Right cardiac atrium (tissue), 5 donors: ENCODE measurements at regions of chr9 and their contacts with region 1.

Region 1: DNA sequence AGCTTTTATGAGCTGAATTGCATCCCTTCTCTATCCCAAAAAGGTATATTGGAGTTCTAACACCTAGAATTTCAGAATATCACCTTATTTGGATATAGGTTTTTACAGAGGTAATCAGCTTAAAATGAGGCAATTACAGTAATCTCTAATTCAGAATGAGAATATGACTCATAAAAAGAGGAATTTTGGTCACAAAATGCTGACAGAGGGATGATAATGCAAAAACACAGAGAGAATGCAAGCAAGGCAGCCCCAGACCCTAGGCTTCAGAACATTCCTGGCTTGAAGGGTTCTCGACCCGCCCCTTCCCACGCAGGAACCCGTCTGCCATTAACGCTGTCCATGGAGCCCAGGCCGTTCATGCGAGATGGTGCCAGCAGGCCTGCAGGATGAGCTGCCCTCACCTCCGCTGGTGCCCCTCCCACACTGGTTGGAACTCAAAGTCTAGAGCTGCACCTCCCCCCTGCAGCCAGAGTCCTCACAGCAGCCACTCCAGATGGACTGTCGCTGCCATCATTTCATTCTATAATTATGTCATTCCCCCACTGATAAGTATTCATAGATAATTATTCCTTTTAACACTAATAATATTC is 1173.4 kb upstream of the ACO1 start:
- DNase-seq: peak in 2 of 3 donors; percentile 39 to 46
- ATAC-seq: no peak
- H3K4me3 ChIP-seq: no peak overlapping the region
- H3K27ac ChIP-seq: no peak overlapping the region
- H3K4me1 ChIP-seq: no peaks in the 10 kb centered on the region
- H3K27me3 ChIP-seq: no peaks in the 10 kb centered on the region

Region 2: GRCh38 chr9:31140316-31140715 is 70.8 kb before region 1 on chr9:
- intact Hi-C with region 1: loop called in 1 of 4 experiments (anchors 10 kb)
- DNase-seq: no peak
- ATAC-seq: no peak
- H3K4me3 ChIP-seq: no peak overlapping the region
- H3K27ac ChIP-seq: no peak overlapping the region
- H3K4me1 ChIP-seq: peaks cover 1% of the 10 kb centered on the region
- H3K27me3 ChIP-seq: no peaks in the 10 kb centered on the region

Region 3: GRCh38 chr9:31174681-31175080 is 36.4 kb before region 1 on chr9:
- intact Hi-C with region 1: no loop called
- DNase-seq: no peak
- ATAC-seq: no peak
- H3K4me3 ChIP-seq: no peak overlapping the region
- H3K27ac ChIP-seq: no peak overlapping the region
- H3K4me1 ChIP-seq: no peaks in the 10 kb centered on the region
- H3K27me3 ChIP-seq: no peaks in the 10 kb centered on the region

Region 4: DNA sequence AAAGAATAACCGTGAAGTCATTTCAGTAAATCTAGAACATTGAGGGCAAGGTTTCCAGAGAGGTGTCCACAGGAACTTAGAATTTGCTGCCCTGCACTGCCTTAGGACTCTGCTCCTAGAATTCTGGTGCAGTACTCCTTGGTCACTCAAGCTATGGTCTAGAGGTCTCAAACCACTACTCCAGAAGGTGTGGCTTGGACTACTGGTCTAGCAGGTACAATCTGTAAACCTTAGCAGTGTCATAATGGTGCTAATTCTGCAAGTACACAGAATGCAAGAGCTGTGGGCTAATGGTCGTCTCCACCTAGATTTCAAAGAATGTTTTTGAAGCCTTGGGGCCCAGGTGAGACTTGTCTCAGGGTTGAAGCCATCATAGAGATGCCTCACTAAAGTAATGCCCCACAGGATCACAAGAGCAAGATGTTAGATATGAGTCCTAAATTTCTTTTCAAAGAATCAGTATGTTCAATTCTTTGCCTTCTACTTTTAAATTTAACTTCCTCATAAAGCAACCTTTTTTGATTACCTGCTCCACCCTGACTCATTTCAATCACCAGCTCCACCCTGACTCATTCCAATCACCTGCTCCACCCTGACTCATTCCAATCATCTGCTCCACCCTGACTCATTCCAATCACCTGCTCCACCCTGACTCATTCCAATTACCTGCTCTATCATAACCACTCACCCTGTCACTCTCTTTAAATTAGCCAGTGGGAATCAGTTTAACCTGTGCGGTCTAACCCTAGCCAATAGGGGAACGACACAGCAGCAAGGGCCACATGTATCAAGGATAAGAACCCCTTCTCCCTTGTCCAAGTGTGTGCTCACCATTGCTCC is 61.6 kb after region 1 on chr9:
- intact Hi-C with region 1: no loop called
- DNase-seq: no peak
- ATAC-seq: no peak
- H3K4me3 ChIP-seq: no peak overlapping the region
- H3K27ac ChIP-seq: no peak overlapping the region
- H3K4me1 ChIP-seq: no peaks in the 10 kb centered on the region
- H3K27me3 ChIP-seq: no peaks in the 10 kb centered on the region